Kidney (tissue), 22 donors: ENCODE measurements at regions of chr12 and their contacts with region 1.

Region 1: DNA sequence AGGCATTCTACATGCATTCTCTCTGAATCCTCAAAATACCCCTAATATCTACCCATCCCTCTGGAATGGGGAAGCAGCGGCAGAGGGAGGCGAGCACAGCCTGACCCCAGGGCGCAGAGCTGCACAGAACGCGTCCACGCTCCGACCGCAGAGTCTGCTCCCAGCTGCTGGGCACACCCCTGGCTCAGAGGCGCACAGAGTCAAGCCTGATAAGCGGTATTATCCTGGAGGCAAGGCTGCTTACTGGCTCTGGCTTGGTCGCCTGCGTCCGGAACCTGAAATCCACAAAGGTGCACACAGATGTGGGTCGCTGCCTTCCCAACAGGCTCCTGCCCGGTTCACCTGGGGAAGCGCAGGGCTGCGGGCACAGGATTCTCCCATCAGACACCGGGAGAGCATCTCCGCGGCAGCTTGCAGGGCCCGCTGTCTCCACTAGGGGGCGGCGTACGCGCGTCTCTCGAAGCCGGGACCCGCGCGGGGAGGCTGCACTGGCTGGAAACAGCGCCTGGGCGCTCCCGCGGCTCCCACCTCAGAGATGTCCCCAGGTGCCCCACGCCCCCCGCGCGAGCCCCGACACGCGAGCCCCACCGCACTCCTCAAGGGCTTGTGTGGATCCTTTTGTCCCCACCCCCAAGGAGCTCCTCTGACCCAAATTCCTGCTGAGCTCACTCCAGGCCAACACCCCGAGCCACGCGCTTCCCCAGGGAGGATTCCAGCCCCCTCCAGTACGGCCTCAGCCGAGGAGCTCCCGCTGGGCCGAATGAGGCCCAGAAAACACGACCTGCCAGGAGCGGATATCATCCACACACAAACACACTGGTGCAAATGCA is 120.1 kb upstream of the FZD10 start:
- DNase-seq: peak in 4 of 5 donors; percentile 66 to 88 (median 80)
- H3K4me3 ChIP-seq: no peak overlapping the region
- H3K27ac ChIP-seq: no peak overlapping the region
- H3K4me1 ChIP-seq: no peaks in the 10 kb centered on the region
- H3K27me3 ChIP-seq: peaks cover 10% of the 10 kb centered on the region
- CTCF ChIP-seq: peak; percentile 69

Region 2: DNA sequence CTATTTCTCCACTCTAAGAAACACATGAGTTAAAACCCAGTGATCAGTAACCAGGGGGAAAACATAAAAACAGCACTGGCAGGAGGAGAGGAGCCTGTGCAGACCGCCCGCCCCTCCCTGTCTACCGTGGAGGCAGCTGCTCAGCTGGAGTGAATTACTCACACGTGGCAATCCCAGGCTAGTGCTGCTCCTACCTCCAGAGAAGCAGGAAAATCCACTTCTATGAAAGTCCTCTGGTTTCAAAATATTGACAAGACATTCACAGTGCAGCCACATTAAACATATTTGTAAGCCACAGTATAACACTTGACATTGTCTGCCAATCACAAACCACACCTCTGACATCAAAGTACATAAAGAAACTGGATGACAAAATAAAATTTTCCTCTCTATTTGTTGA is 155.1 kb before region 1 on chr12:
- intact Hi-C with region 1: no loop called
- DNase-seq: peak in 4 of 5 donors; percentile 63 to 72 (median 65)
- H3K4me3 ChIP-seq: no peak overlapping the region
- H3K27ac ChIP-seq: no peak overlapping the region
- H3K4me1 ChIP-seq: no peaks in the 10 kb centered on the region
- H3K27me3 ChIP-seq: no peaks in the 10 kb centered on the region
- CTCF ChIP-seq: no peak

Region 3: GRCh38 chr12:130335517-130336392 is 293.6 kb after region 1 on chr12:
- intact Hi-C with region 1: loop called (anchors 5 kb)
- DNase-seq: peak in 3 of 5 donors; percentile 52 to 86 (median 84)
- H3K4me3 ChIP-seq: no peak overlapping the region
- H3K27ac ChIP-seq: no peak overlapping the region
- H3K4me1 ChIP-seq: no peaks in the 10 kb centered on the region
- H3K27me3 ChIP-seq: peaks cover 16% of the 10 kb centered on the region
- CTCF ChIP-seq: peak; percentile 79

Region 4: DNA sequence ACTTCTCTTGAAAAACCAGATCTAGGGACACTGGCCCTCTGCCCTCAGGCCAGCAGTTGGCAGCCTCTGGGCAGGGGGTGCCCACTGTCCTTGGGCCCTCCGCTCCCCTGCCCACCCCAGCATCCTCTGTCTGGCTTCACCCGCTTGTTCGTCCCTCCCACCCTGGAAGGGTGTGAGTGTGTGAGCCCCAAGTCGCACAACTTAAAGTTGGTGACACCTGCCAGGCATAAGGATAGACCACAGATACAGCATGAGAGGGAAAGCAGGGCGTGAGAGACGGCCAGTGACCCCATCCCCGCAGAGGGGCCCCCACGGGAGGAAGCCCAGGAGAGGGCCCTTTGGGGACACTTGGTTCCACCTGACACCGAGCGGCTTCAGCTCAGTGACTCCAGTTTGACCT is 697.4 kb after region 1 on chr12:
- intact Hi-C with region 1: loop called (anchors 10 kb)
- DNase-seq: peak in 1 of 5 donors; percentile 59
- H3K4me3 ChIP-seq: no peak overlapping the region
- H3K27ac ChIP-seq: no peak overlapping the region
- H3K4me1 ChIP-seq: no peaks in the 10 kb centered on the region
- H3K27me3 ChIP-seq: no peaks in the 10 kb centered on the region
- CTCF ChIP-seq: no peak